ENCODE measurements at regions of chr13 and their contacts with region 1.

Region 1: GRCh38 chr13:27533155-27533643 is 82.8 kb upstream of the MTIF3 start:
- DNase-seq: peak; percentile 72 to 87
- H3K4me3 ChIP-seq: no peak overlapping the region
- H3K4me3 Mint-ChIP-seq: no peak overlapping the region
- H3K27ac Mint-ChIP-seq: no peak overlapping the region
- H3K4me1 ChIP-seq: peaks cover 9% of the 10 kb centered on the region
- H3K4me1 Mint-ChIP-seq: peaks cover 11% of the 10 kb centered on the region
- H3K27me3 ChIP-seq: no peaks in the 10 kb centered on the region
- H3K27me3 Mint-ChIP-seq: no peaks in the 10 kb centered on the region
- CTCF ChIP-seq: peak; percentile 89 to 98

Region 2: GRCh38 chr13:27559714-27560113 is 26.5 kb after region 1 on chr13:
- CTCF ChIA-PET with region 1: no interaction called
- POLR2A ChIA-PET with region 1: no interaction called
- intact Hi-C with region 1: no loop called
- DNase-seq: no peak
- H3K4me3 ChIP-seq: no peak overlapping the region
- H3K4me3 Mint-ChIP-seq: no peak overlapping the region
- H3K27ac Mint-ChIP-seq: no peak overlapping the region
- H3K4me1 ChIP-seq: no peaks in the 10 kb centered on the region; the same call in 1 of the 2 replicates
- H3K4me1 Mint-ChIP-seq: no peaks in the 10 kb centered on the region
- H3K27me3 ChIP-seq: no peaks in the 10 kb centered on the region
- H3K27me3 Mint-ChIP-seq: no peaks in the 10 kb centered on the region
- CTCF ChIP-seq: no peak

Region 3: GRCh38 chr13:27712421-27712820 is 179.2 kb after region 1 on chr13:
- CTCF ChIA-PET with region 1: no interaction called
- POLR2A ChIA-PET with region 1: no interaction called
- intact Hi-C with region 1: loop called (anchors 5 kb)
- DNase-seq: peak in 1 of 2 experiments; percentile 30
- H3K4me3 ChIP-seq: no peak overlapping the region
- H3K4me3 Mint-ChIP-seq: no peak overlapping the region
- H3K27ac Mint-ChIP-seq: no peak overlapping the region
- H3K4me1 ChIP-seq: no peaks in the 10 kb centered on the region
- H3K4me1 Mint-ChIP-seq: no peaks in the 10 kb centered on the region
- H3K27me3 ChIP-seq: no peaks in the 10 kb centered on the region
- H3K27me3 Mint-ChIP-seq: peaks cover 2% of the 10 kb centered on the region
- CTCF ChIP-seq: peak; percentile 42 to 47

Region 4: DNA sequence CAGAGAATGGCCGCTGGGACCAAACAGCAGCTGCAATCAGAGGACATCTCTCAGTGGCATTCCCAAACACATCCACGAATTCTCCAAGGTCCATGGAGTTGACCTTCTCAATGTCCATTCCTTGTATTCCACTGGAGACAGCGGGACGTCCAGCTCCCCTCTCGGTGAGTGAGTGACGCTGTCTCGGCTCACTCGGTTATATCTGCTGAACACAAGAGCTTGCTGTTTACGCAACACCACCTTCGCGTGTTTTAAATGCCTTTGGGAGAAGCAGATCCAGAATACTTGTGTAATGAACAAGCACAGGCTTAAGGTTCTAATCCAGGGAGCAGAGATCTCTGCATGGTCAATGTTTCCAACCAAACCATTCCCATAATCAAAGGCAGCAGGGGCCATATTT is 455.3 kb after region 1 on chr13 and contains the start of gene URAD:
- CTCF ChIA-PET with region 1: interaction called, 5 read pairs
- POLR2A ChIA-PET with region 1: no interaction called
- intact Hi-C with region 1: loop called (anchors 2 kb)
- DNase-seq: peak; percentile 69 to 75
- H3K4me3 ChIP-seq: no peak within 1 kb of the TSS
- H3K4me3 Mint-ChIP-seq: peak within 1 kb of the TSS; percentile 43
- H3K27ac Mint-ChIP-seq: peak within 1 kb of the TSS; percentile 48
- H3K4me1 ChIP-seq: peaks cover 25% of the 10 kb centered on the region
- H3K4me1 Mint-ChIP-seq: peaks cover 17% of the 10 kb centered on the region
- H3K27me3 ChIP-seq: no peaks in the 10 kb centered on the region
- H3K27me3 Mint-ChIP-seq: no peaks in the 10 kb centered on the region
- CTCF ChIP-seq: no peak
- total RNA-seq, gene URAD: 5.2 and 8.1 TPM in 2 replicates

Measured in Caco-2 (cell line).